ENCODE measurements at regions of chr20 and their contacts with region 1.

Region 1: DNA sequence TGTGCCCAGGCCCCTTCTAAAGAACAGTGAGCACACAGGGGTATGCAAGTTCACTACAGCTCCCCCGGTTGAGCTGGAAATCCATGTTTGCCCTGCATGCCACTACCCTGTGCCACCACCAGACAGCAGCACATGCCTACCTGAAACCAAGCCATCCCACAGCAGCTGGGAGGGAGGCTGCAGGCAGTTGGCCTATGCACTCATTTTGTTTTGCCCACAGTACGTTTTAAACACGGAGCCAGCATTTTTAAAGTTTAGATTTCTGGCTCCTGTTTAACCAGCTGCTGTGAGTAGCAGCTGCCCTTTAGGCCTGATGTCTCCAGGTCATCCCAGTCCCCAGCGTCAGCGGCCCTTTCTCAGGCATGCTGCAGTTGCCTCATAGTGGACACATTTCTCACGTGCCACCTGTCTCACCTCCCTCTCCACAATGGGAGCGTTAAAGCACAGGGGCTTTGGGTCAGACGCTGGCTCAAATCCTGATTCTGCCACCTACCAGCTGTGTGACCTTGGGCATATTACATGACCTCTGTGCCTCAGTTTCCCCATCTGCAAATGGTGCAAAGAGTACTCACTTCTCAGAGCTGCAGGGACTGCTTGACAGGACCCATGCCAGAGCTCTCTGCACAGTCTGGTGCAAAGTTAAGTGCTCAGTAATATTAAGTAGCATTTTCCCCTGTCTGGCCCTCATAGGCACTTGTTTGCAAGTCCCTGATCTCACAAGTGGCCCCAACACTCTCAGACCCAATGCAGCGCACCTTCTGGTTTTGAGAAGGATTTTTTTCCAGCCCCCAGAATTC is 8.1 kb upstream of the UBE2V1 start:
- DNase-seq: peak; percentile 83
- H3K4me3 ChIP-seq: no peak overlapping the region; a peak in 1 of 4 replicates
- H3K27ac ChIP-seq: no peak overlapping the region
- H3K4me1 ChIP-seq: peaks cover 3 to 4% of the 10 kb centered on the region in 2 experiments; a peak in 2 of 4 replicates
- H3K27me3 ChIP-seq: no peaks in the 10 kb centered on the region
- CTCF ChIP-seq: peak; percentile 80
- EP300 ChIP-seq: no peak
- RAD21 ChIP-seq: peak; percentile 97

Region 2: GRCh38 chr20:49951151-49951550 is 169.9 kb before region 1 on chr20:
- CTCF ChIA-PET with region 1: no interaction called
- POLR2A ChIA-PET with region 1: no interaction called
- DNase-seq: no peak
- H3K4me3 ChIP-seq: peak overlapping the region in 1 of 2 experiments; percentile 3; a peak in 1 of 4 replicates
- H3K27ac ChIP-seq: peak overlapping the region in 1 of 2 experiments; percentile 99; a peak in 2 of 4 replicates
- H3K4me1 ChIP-seq: peaks cover 0 to 25% of the 10 kb centered on the region in 2 experiments; a peak in 2 of 4 replicates
- H3K27me3 ChIP-seq: no peaks in the 10 kb centered on the region
- CTCF ChIP-seq: no peak
- EP300 ChIP-seq: peak in 1 of 2 experiments; percentile 59; a peak in 1 of 4 replicates
- RAD21 ChIP-seq: no peak

Region 3: DNA sequence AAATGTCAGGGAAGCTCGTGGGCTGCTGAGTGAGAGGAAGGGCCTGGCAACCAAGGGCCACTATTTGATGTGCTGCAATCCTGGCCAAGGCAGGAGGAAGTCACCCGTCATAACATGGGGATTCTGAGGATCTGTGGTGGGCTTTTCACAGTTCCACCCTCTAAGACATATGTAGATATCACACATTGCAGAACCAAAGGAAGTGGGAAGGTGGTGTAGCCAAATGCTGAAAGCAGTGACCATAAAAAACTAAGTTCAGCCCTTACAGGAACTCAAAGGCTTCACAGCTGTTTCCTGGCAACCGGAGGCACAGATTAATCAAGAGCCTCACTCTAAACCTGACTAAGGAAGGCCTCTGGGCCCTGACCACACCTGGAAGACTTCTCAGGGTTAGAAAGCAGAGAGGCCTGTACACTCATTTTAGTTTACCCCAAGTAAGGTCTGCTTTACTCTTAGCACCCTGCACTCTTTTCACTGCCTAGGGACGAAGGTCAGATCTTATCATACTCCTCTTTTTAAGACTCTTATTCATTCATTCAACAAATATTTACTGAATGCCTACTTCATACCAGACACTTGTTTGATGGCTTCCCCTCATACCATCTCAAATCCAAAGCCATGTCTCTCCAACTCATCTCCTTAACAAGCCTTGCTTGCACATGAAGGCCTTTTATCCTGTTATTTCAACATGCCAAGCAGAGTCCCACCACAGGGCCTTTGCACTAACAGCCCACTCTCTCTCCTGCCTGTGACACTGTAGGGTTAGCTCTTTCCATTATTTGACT is 10.8 kb before region 1 on chr20:
- CTCF ChIA-PET with region 1: interaction called, 10 read pairs
- POLR2A ChIA-PET with region 1: no interaction called
- DNase-seq: no peak
- H3K4me3 ChIP-seq: 0 out of 4 replicates have a peak overlapping the region, but pooled peaks of 1 of the 2 experiments have one; percentile 83
- H3K27ac ChIP-seq: peak overlapping the region in 1 of 2 experiments; percentile 91; a peak in 3 of 4 replicates
- H3K4me1 ChIP-seq: peaks cover 46% of the 10 kb centered on the region in 2 experiments; a peak in 3 of 4 replicates
- H3K27me3 ChIP-seq: no peaks in the 10 kb centered on the region
- CTCF ChIP-seq: no peak
- EP300 ChIP-seq: no peak
- RAD21 ChIP-seq: no peak

Region 4: DNA sequence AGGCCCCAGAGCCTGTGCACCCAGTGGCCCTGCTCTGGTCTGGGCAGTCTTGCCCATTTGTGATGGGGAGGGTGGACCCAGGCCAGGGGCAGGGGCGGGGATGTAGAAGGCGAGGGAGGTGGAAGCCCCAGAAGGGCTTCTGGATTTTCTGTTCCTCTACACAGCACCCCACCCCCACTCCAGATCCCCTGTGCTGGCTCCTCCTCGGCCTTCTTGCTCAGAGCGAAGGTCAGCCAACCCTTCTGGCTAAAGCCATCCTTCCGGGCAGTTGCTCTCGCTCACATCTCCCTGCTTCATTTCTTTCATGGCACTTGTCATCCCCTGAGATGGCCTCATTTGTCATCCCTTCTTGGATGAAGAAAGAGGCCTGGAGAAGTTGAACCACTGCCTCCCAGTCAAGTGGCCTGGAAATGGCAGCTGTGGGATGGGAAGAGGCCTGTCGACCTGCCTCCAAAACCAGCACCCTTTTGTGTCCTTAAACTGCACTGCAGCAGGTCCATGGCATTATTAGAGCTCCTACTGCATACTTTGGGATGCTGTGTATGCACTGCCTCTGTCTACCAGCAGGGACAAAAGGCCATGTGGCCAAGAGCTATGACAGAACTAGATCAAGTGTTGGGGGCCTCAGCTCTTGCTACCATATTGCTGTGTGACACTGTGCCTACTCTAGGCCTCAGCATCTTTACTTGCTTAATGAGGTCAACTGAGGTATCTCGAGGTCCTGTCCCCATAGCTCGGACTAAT is 12.6 kb after region 1 on chr20:
- CTCF ChIA-PET with region 1: interaction called, 44 read pairs
- POLR2A ChIA-PET with region 1: interaction called, 3 read pairs
- DNase-seq: no peak
- H3K4me3 ChIP-seq: no peak overlapping the region
- H3K27ac ChIP-seq: no peak overlapping the region
- H3K4me1 ChIP-seq: no peaks in the 10 kb centered on the region; a peak in 2 of 4 replicates
- H3K27me3 ChIP-seq: no peaks in the 10 kb centered on the region
- CTCF ChIP-seq: no peak; the same call in 1 of the 2 replicates
- EP300 ChIP-seq: no peak
- RAD21 ChIP-seq: no peak

Region 5: GRCh38 chr20:50138479-50139393 is 17.6 kb after region 1 on chr20:
- CTCF ChIA-PET with region 1: interaction called, 44 read pairs
- POLR2A ChIA-PET with region 1: no interaction called
- DNase-seq: no peak
- H3K4me3 ChIP-seq: no peak overlapping the region
- H3K27ac ChIP-seq: no peak overlapping the region
- H3K4me1 ChIP-seq: peaks cover 0 to 14% of the 10 kb centered on the region in 2 experiments; a peak in 2 of 4 replicates
- H3K27me3 ChIP-seq: no peaks in the 10 kb centered on the region
- CTCF ChIP-seq: no peak; the same call in 1 of the 2 replicates
- EP300 ChIP-seq: no peak
- RAD21 ChIP-seq: no peak

Region 6: DNA sequence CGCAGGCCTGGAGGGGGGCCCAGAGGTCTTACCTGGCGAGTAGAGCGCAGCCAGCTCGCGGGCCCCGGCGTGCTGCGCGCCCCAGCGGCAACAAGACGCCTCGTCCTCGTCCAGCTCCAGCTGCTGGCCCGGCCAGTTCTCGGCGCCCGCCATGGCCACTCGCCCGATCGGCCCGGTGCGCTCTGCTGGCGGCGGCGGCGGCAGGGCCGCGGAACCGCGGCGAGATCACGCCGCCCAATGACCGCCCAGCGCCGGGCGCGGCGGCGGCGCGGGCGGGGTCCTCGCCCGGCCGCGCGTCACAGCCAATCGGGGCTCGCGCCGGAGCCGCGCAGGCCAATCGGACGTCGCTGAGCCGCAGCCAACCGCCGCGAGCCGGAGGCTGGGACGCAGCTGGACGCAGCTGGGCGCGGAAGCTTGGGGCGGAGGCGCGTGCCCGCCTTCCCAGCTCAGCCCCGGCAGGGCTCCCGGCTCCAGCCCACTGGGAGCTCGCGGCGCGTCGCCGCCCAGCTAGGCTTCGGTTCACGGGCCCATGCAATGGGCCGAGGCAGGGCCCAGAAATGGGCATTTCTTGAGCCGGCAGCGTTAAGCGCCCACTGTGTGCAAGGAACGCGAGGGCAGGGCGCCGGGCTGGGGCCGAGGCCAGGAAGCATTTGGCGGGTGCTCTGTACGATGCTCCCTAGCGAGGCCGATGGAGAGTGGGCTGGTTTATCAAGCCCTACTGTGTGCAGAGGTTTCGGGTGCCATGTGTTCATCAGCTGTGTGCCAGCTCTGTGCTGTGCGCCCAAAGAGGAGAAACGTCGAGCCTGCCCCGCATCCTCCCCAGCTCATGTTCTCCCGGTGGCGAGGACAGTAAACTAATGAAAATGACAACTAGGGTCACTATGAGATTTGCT is 32.6 kb after region 1 on chr20 and contains the start of gene PEDS1:
- CTCF ChIA-PET with region 1: interaction called, 113 read pairs
- POLR2A ChIA-PET with region 1: interaction called, 16 read pairs
- DNase-seq: peak; percentile 99
- H3K4me3 ChIP-seq: peak within 1 kb of the TSS; percentile 78 to 97
- H3K27ac ChIP-seq: peak within 1 kb of the TSS; percentile 41 to 82; a peak in 3 of 4 replicates
- H3K4me1 ChIP-seq: peaks cover 3 to 32% of the 10 kb centered on the region in 2 experiments; a peak in 1 of 4 replicates
- H3K27me3 ChIP-seq: no peaks in the 10 kb centered on the region
- CTCF ChIP-seq: no peak
- EP300 ChIP-seq: peak in 1 of 2 experiments; percentile 23; a peak in 1 of 4 replicates
- RAD21 ChIP-seq: no peak; the same call in 1 of the 2 replicates
- polyA plus RNA-seq, gene PEDS1: 18.3 and 18.4 TPM in 2 replicates

Region 7: DNA sequence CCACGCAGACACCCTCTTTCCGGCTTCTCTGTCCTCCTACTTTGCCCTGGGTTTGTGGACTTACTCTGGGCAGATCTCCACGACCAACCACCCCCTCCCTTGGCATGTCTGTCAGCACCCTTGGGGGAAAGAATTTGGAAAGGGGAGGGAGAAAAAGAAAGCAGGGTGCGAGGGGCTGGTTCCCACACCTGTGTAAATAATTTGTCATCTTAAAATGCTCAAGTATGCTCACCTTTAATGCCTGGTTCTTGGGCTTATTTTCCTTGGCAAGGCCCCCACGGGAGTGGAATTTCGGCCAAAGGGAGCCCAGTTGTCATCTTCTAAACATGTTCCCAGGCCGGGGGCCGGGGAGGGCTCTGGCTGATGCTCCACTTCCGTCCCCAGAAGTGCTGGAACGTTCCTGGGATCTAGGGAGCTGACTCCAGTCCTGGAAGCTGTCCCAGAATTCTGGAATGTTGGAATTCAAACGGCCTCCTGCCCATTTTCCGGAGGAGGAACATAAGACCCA is 191.6 kb after region 1 on chr20:
- CTCF ChIA-PET with region 1: no interaction called
- POLR2A ChIA-PET with region 1: no interaction called
- DNase-seq: no peak
- H3K4me3 ChIP-seq: no peak overlapping the region
- H3K27ac ChIP-seq: peak overlapping the region in 1 of 2 experiments; percentile 47; a peak in 2 of 4 replicates
- H3K4me1 ChIP-seq: peaks cover 14 to 15% of the 10 kb centered on the region in 2 experiments
- H3K27me3 ChIP-seq: no peaks in the 10 kb centered on the region
- CTCF ChIP-seq: no peak
- EP300 ChIP-seq: no peak
- RAD21 ChIP-seq: no peak

Region 8: DNA sequence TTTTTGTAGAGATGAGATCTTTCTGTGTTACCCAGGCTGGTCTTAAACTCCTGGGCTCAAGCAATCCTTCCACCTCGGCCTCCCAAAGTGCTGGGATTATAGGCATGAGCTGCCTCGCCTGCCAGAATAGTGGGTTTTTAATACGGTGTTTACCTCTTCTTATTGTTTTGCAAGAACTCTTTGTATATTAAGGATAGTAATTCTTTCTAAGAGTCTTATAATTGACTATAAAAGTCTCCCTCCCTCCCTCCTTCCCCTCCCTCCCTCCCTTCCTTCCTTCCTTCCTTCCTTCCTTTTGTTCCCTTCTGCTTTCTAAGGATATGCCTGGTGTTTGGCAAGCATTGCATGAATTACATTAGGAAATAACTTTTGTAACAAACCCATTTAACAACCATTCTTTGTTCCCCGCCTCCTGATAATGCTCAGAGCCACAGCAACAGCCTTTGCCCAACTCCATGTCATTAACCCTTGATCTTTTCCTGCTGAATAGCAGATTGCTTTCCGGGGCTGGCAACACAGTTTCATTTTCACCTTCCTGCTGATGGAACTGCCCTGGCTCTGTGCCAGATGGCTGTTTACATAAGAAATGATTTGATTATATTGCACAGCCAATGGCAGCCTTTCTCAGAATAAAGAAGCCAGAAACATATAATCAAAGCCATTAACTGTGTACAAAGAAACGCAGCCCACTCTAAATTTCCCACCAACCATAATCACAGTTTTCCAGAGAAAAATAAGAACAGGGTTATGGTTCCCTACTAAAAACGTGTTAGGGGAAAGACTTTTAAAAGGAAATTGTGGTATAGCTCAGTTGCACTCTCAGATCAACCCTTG is 245.4 kb after region 1 on chr20:
- CTCF ChIA-PET with region 1: no interaction called
- POLR2A ChIA-PET with region 1: no interaction called
- DNase-seq: peak; percentile 71
- H3K4me3 ChIP-seq: no peak overlapping the region
- H3K27ac ChIP-seq: peak overlapping the region in 1 of 2 experiments; percentile 82; a peak in 2 of 4 replicates
- H3K4me1 ChIP-seq: no peaks in the 10 kb centered on the region; a peak in 1 of 4 replicates
- H3K27me3 ChIP-seq: no peaks in the 10 kb centered on the region
- CTCF ChIP-seq: no peak
- EP300 ChIP-seq: 0 out of 4 replicates have a peak, but pooled peaks of 1 of the 2 experiments have one; percentile 31
- RAD21 ChIP-seq: no peak